Motor neuron (in vitro differentiated cells): ENCODE measurements at regions of chr2 and their contacts with region 1.

Region 1: DNA sequence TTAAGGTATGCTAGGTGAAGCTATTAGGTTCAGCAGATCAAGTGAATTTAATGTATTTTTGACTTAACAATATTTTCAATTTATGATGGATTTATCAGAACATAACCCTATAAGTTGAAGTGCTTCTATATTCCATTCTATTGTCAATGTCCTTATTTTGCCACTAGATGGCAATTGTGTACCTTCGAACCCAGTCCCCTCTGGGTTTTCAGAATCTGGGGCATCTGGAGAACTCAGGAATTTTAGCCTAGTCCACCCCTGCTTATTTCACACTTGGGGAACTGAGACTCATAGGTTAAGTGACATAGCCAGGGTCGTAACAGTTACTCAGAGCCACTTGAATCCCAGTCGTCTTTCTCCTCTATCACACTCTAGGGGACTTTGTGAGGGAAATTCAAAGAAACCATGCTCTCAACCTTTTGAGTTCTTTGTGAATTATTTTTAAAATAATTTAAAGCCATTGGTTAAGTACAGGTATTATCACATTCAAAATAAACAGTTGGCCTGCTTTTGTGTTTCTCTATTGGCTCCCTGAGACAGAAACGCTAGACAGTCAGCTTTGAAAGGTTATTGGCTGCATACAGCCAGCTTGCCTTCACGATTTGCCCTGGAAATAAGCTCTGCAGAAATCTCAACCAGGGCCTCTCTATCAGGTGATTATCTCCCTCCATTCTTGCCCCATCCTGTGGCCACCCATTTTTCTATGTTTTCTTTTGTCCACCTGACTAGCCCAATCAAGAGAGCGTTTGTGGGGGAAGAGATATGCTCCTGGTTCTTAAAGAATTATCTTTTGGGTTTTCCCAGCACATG is 145.0 kb downstream of the TTC27 start:
- ATAC-seq: peak; percentile 59 to 85 (median 78)
- H3K4me3 ChIP-seq: no peak overlapping the region
- H3K27ac ChIP-seq: no peak overlapping the region
- H3K4me1 ChIP-seq: peaks cover 11% of the 10 kb centered on the region in 2 donors

Region 2: DNA sequence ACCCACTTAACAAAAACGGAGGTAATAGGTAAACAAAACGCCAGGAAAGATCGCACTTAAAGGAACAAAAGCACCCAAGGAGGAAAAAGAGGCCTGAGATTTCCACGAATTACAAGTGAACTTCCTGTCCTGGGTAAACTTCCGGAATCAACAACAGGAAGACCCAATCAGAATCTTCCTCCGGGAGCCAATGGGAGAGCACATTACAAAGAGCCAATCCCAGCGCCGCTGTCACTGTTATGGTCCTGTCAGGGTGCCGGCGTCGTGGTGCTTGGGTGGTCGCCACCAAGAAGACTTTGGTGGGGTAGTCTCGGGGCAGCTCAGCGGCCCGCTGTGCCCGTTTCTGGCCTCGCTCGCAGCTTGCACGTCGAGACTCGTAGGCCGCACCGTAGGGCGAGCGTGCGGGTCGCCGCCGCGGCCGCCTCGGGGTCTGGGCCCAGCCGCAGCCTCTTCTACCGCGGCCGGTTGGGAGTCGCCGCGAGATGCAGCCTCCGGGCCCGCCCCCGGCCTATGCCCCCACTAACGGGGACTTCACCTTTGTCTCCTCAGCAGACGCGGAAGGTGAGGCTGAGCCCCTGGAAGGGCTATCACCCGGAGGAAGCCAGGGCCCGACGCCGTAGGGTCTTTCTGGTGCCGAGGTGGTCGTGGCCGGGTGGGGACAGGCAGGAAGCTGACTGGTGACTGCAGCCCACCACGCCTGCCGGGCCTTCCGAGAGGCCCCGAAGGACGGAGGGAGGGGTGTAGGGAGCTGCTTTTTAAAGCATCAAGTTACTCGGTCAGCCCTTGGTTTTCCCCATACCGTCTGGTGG is 495.0 kb before region 1 on chr2 and contains the start of gene YIPF4:
- in situ Hi-C with region 1: no loop called
- ATAC-seq: peak; percentile 98 to 100 (median 99)
- H3K4me3 ChIP-seq: peak within 1 kb of the TSS; percentile 76 to 89 (median 85)
- H3K27ac ChIP-seq: peak within 1 kb of the TSS; percentile 73 to 84
- H3K4me1 ChIP-seq: peaks cover 8 to 12% of the 10 kb centered on the region in 2 donors
- total RNA-seq, gene YIPF4: 15.5 to 32.4 (median 21.5) TPM

Region 3: GRCh38 chr2:32946314-32947075 is 173.7 kb after region 1 on chr2 and contains the start of gene LTBP1:
- in situ Hi-C with region 1: loop called in 1 of 9 experiments (anchors 10 kb)
- ATAC-seq: peak; percentile 65 to 83 (median 74)
- H3K4me3 ChIP-seq: peak within 1 kb of the TSS; percentile 66 to 92 (median 81)
- H3K27ac ChIP-seq: peak within 1 kb of the TSS in 1 of 2 donors; percentile 65
- H3K4me1 ChIP-seq: peaks cover 0 to 7% of the 10 kb centered on the region in 2 donors
- total RNA-seq, gene LTBP1: 2.8 to 692 (median 20.8) TPM

Region 4: DNA sequence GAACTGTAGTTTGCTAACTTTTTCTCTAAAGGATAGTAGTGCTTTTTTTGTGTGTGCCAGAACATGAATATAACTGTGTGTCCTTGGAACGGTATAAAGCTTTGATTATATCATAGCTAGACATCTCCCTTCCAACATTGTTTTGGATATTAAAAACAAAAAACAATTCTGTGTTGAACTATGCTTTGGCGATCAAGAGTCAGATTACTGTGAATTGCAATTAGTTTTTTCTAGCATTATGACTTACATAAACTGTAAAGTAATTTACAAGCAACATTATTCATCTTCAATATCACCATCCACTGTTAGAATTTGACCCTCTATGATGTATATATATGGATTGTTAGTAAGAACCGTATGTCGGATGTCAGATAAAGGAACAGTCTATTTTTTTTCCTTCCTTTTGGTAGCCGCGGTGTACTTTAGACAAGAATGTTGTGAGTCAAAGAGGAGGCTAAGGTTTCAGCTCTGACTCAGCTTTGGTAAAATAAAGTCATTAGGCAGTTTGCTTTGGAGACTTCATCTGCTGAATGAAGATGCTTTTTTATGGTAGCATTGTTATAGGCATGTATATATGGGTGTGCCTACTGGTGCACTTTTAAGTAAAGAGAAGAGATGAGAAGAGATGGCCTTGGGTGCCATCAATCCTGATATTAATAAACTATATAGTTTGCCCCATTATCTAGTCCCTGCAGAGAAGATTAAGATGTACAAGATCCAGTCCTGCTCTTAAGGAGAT is 250.3 kb after region 1 on chr2:
- in situ Hi-C with region 1: loop called in 2 of 9 experiments (anchors 10 to 25 kb)
- ATAC-seq: peak in 6 of 8 experiments; percentile 32 to 81 (median 66)
- H3K4me3 ChIP-seq: no peak overlapping the region
- H3K27ac ChIP-seq: no peak overlapping the region
- H3K4me1 ChIP-seq: peaks cover 0 to 2% of the 10 kb centered on the region in 2 donors

Region 5: GRCh38 chr2:33229646-33230045 is 456.8 kb after region 1 on chr2:
- in situ Hi-C with region 1: no loop called
- ATAC-seq: no peak
- H3K4me3 ChIP-seq: no peak overlapping the region
- H3K27ac ChIP-seq: no peak overlapping the region
- H3K4me1 ChIP-seq: peaks cover 0 to 9% of the 10 kb centered on the region in 2 donors

Region 6: DNA sequence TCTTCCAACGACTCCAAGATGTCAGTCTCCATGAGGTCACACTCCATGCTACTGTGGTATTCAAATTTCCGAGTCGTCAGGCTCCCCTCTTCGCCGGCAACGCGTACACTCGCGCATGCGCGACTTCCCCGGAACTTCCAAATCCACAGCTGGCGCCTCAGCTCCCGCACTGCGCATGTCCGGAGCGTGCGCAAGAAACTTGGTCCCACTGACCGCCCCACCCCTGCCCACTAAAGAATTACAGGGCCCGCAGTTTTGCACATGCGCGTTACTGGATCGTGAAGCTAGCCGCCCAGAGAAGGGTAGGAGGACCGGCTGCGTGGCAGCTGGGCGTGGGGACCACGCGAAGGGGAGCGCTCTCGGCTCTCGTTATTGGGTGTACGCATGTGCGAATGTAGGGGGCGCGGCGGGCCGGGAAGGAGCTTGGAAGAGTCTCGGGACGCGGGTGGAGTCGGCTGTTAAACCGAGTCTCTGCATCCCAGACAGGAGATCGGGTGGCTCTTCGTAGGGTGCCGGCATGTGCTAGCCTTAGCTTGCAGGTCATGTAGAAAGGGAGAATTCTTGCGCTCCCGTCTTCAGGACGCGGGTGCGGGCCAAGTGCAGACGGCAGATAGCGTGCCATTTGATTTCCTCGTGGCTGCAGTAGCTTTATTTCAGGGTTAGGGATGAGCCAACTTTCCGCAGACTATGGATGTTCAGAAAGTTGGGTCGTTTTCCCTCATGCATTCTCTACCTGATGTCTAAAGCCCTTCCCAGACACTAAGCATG is 826.5 kb after region 1 on chr2 and contains the start of gene FAM98A:
- in situ Hi-C with region 1: loop called in 2 of 9 experiments (anchors 25 kb)
- ATAC-seq: peak; percentile 88 to 93 (median 90)
- H3K4me3 ChIP-seq: peak within 1 kb of the TSS; percentile 55 to 84 (median 65)
- H3K27ac ChIP-seq: peak within 1 kb of the TSS; percentile 79 to 86
- H3K4me1 ChIP-seq: peaks cover 3 to 8% of the 10 kb centered on the region in 2 donors
- total RNA-seq, gene FAM98A: 20.1 to 100 (median 40.7) TPM